ENCODE measurements at regions of chr13 and their contacts with region 1.

Region 1: GRCh38 chr13:74133657-74134201 is 475 bp downstream of the KLF12 start:
- DNase-seq: peak; percentile 82
- H3K4me3 Mint-ChIP-seq: peak overlapping the region; percentile 97
- H3K27ac Mint-ChIP-seq: peak overlapping the region; percentile 99
- H3K4me1 Mint-ChIP-seq: peaks cover 32% of the 10 kb centered on the region
- H3K27me3 Mint-ChIP-seq: peaks cover 8% of the 10 kb centered on the region

Region 2: GRCh38 chr13:73715114-73715910 is 418.4 kb before region 1 on chr13:
- intact Hi-C with region 1: loop called (anchors 1 kb)
- DNase-seq: peak; percentile 53
- H3K4me3 Mint-ChIP-seq: peak overlapping the region; percentile 55
- H3K27ac Mint-ChIP-seq: peak overlapping the region; percentile 79
- H3K4me1 Mint-ChIP-seq: peaks cover 54% of the 10 kb centered on the region
- H3K27me3 Mint-ChIP-seq: no peaks in the 10 kb centered on the region

Region 3: GRCh38 chr13:73943137-73943964 is 190.4 kb before region 1 on chr13:
- intact Hi-C with region 1: loop called (anchors 2 kb)
- DNase-seq: no peak
- H3K4me3 Mint-ChIP-seq: peak overlapping the region; percentile 24
- H3K27ac Mint-ChIP-seq: peak overlapping the region; percentile 82
- H3K4me1 Mint-ChIP-seq: peaks cover 47% of the 10 kb centered on the region
- H3K27me3 Mint-ChIP-seq: no peaks in the 10 kb centered on the region

Region 4: DNA sequence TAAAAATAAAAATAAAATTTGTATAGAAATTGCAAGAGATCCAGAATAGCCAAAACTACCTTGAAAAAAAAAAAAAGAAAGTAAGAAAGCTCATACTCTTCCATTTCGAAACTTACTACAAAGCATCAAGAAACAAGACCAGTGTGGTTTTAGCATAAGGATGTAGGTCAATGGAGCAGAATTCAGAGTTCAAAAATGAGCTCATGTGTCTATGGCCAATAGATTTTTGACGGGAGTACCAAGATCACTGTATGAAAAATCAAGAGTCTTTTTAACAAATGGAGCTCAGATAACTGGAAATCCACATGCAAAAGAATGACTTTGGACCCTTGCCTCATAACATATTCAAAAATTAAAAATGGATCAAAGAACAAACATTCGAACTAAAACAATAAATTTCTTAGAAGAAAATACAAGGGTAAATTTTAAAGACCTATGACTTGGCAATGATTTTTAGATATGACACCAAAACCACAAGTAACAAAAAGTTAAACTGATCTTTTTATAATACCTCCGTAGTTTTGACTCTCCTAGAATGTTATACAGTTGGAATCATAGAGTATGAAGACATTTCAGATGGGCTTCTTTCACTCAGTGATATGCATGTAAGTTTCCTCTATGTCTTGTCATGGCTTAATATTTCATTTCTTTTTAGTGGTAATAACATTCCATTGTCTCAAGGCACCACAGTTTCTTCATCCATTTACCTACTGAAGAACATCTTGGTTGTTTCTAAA is 42.7 kb before region 1 on chr13:
- intact Hi-C with region 1: loop called (anchors 2 kb)
- DNase-seq: no peak
- H3K4me3 Mint-ChIP-seq: no peak overlapping the region
- H3K27ac Mint-ChIP-seq: no peak overlapping the region
- H3K4me1 Mint-ChIP-seq: peaks cover 36% of the 10 kb centered on the region
- H3K27me3 Mint-ChIP-seq: no peaks in the 10 kb centered on the region

Region 5: GRCh38 chr13:74145249-74145975 is 11.7 kb after region 1 on chr13:
- intact Hi-C with region 1: no loop called
- DNase-seq: no peak
- H3K4me3 Mint-ChIP-seq: no peak overlapping the region
- H3K27ac Mint-ChIP-seq: no peak overlapping the region
- H3K4me1 Mint-ChIP-seq: no peaks in the 10 kb centered on the region
- H3K27me3 Mint-ChIP-seq: peaks cover 30% of the 10 kb centered on the region

Region 6: DNA sequence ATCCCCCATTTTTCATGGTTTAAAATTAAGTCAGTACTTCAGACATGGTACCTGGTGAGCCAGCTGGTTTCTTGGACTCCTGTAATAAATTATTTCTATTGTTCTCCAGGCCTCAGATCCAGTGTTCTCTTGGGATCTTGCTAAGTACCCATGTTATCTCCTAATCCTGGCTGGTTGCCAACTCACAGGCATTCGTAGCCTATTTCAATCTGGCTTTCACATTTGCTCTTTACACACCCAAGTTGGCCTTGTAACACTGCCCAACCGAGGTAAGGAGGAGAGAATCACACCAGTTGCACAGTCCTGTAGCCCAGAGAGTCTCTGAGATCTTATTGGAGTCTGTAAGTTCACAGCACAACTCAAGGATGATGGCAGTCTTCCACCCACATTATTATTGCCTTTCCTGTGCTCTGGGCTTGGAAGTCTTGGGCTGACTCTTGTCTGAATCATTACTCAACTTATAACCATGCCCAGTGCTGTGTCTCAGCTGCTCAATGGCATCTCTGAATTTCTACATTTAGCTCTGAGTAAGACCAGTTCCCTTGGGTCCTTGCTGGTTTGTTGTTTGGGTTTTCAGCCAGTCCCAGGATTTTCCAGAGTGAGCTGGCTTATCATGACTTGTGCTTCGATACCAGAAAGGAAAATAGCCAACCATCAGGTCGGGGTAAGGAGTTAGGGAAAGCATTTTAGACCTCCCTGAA is 77.1 kb after region 1 on chr13:
- intact Hi-C with region 1: no loop called
- DNase-seq: no peak
- H3K4me3 Mint-ChIP-seq: no peak overlapping the region
- H3K27ac Mint-ChIP-seq: no peak overlapping the region
- H3K4me1 Mint-ChIP-seq: no peaks in the 10 kb centered on the region
- H3K27me3 Mint-ChIP-seq: peaks cover 35% of the 10 kb centered on the region

Region 7: GRCh38 chr13:74287724-74288169 is 154.0 kb after region 1 on chr13:
- intact Hi-C with region 1: loop called (anchors 1 kb)
- DNase-seq: peak; percentile 71
- H3K4me3 Mint-ChIP-seq: peak overlapping the region; percentile 15
- H3K27ac Mint-ChIP-seq: peak overlapping the region; percentile 33
- H3K4me1 Mint-ChIP-seq: peaks cover 33% of the 10 kb centered on the region
- H3K27me3 Mint-ChIP-seq: peaks cover 20% of the 10 kb centered on the region